Caco-2 (cell line): ENCODE measurements at regions of chr3 and their contacts with region 1.

Region 1: GRCh38 chr3:10205451-10206165 is 40.9 kb downstream of the IRAK2 start:
- DNase-seq: no peak
- H3K4me3 ChIP-seq: no peak overlapping the region
- H3K4me3 Mint-ChIP-seq: no peak overlapping the region
- H3K27ac Mint-ChIP-seq: peak overlapping the region; percentile 94
- H3K4me1 ChIP-seq: peaks cover 56% of the 10 kb centered on the region
- H3K4me1 Mint-ChIP-seq: peaks cover 17% of the 10 kb centered on the region
- H3K27me3 ChIP-seq: no peaks in the 10 kb centered on the region
- H3K27me3 Mint-ChIP-seq: no peaks in the 10 kb centered on the region
- CTCF ChIP-seq: no peak

Region 2: GRCh38 chr3:9782777-9783176 is 422.8 kb before region 1 on chr3:
- CTCF ChIA-PET with region 1: no interaction called
- POLR2A ChIA-PET with region 1: no interaction called
- intact Hi-C with region 1: no loop called
- DNase-seq: no peak
- H3K4me3 ChIP-seq: no peak overlapping the region
- H3K4me3 Mint-ChIP-seq: no peak overlapping the region
- H3K27ac Mint-ChIP-seq: no peak overlapping the region
- H3K4me1 ChIP-seq: no peaks in the 10 kb centered on the region
- H3K4me1 Mint-ChIP-seq: peaks cover 5% of the 10 kb centered on the region
- H3K27me3 ChIP-seq: no peaks in the 10 kb centered on the region
- H3K27me3 Mint-ChIP-seq: no peaks in the 10 kb centered on the region
- CTCF ChIP-seq: peak in 1 of 2 experiments; percentile 14

Region 3: DNA sequence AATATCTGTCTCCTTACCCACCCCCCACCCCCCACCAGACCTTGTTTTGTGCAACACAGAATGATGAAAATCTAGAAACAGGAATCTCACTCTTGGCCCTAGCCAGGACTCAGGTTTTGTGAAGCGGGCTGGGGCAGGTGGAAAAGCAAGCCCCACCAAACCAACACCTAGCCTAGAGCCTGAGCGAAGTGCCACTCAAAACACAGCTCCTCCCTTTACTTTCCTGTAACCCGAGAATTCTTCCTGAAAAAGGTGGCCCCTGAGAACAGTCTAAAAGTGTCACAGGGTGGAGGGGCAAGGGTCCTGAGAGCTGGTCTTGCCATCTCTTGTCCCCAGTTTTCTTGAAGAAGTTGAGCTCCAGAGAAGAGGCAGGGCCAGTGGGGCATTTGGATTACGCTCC is 344.4 kb before region 1 on chr3:
- CTCF ChIA-PET with region 1: no interaction called
- POLR2A ChIA-PET with region 1: interaction called, 12 read pairs
- intact Hi-C with region 1: no loop called
- DNase-seq: no peak
- H3K4me3 ChIP-seq: no peak overlapping the region
- H3K4me3 Mint-ChIP-seq: no peak overlapping the region
- H3K27ac Mint-ChIP-seq: no peak overlapping the region
- H3K4me1 ChIP-seq: no peaks in the 10 kb centered on the region; the same call in 1 of the 2 replicates
- H3K4me1 Mint-ChIP-seq: no peaks in the 10 kb centered on the region
- H3K27me3 ChIP-seq: no peaks in the 10 kb centered on the region
- H3K27me3 Mint-ChIP-seq: no peaks in the 10 kb centered on the region
- CTCF ChIP-seq: no peak

Region 4: DNA sequence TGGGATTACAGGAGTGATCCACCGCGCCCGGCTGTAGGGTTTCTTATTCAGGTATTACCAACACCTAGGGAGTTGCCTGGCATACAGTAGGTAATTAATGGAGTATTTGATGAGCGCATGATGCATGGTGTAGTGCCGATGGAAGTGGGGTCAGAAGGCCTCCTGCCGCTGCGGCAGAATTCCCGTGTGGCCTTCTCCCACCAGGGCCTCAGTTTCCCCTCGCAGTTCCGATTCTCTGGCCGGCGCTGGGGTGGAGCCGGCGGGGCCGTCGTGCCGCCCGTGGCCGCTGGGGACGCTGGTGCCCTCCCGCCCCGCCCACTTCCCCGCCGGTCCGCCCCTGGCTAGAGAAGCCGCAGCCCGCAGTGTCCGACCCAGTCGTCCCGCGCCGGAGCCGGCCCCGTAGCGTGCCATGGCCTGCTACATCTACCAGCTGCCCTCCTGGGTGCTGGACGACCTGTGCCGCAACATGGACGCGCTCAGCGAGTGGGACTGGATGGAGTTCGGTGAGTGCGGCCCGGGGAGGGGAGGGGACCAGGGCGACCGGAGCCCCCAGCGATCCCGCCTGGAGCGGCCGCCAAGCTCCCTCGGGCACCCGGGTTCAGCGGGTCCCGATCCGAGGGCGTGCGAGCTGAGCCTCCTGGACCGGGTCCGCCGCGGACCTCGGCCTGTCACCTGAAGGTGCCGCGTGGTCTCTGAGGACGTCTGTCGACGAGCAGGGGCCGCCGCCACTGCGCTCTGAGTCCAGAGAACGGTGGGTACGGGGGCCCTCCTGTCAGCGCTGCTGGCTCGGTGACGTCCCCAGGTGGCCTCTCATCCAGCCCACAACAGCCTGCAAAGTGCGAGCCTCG is 40.8 kb before region 1 on chr3 and contains the start of gene IRAK2:
- CTCF ChIA-PET with region 1: interaction called, 4 read pairs
- POLR2A ChIA-PET with region 1: interaction called, 3 read pairs
- intact Hi-C with region 1: loop called (anchors 2 kb)
- DNase-seq: peak; percentile 73 to 82
- H3K4me3 ChIP-seq: peak within 1 kb of the TSS; percentile 89
- H3K4me3 Mint-ChIP-seq: peak within 1 kb of the TSS; percentile 68
- H3K27ac Mint-ChIP-seq: no peak within 1 kb of the TSS
- H3K4me1 ChIP-seq: peaks cover 4% of the 10 kb centered on the region; the same call in 1 of the 2 replicates
- H3K4me1 Mint-ChIP-seq: no peaks in the 10 kb centered on the region
- H3K27me3 ChIP-seq: no peaks in the 10 kb centered on the region
- H3K27me3 Mint-ChIP-seq: no peaks in the 10 kb centered on the region
- CTCF ChIP-seq: peak; percentile 53 to 89
- total RNA-seq, gene IRAK2: 3.8 and 4.2 TPM in 2 replicates

Region 5: DNA sequence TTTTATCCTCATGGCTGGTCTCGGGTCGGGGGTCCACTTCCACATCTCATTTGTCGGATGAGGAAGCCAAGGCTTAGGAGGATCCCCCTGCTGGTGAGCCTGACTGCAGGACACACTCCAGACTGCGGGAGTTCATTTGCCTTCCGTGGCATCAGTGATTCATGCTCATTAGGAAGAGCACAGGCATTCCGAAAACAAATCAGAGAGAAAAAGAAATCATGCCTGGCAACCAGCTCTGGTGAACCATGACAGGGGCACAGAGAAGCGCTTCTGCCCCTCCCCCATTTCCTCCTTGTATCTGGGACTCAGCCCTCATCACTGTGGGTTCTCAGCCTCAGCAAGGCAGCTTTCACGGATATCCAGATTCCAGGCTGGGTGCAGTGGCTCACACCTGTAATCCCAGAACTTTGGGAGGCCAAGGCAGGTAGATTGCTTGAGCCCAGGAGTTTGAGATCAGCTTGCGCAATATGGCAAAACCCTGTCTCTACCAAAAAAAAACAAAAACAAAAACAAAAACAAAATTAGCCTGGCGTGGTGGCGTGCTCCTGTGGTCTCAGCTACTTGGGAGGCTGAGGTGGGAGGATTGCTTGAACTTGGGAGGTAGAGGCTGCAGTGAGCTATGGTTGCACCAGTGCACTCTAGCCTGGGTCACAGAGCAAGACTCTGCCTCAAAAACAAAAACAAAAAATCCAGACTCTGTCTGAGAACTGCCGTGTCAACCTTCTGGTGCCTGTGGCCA is 12.5 kb before region 1 on chr3:
- CTCF ChIA-PET with region 1: interaction called, 12 read pairs
- POLR2A ChIA-PET with region 1: interaction called, 12 read pairs
- intact Hi-C with region 1: loop called (anchors 1 kb)
- DNase-seq: no peak
- H3K4me3 ChIP-seq: no peak overlapping the region
- H3K4me3 Mint-ChIP-seq: no peak overlapping the region
- H3K27ac Mint-ChIP-seq: peak overlapping the region; percentile 85
- H3K4me1 ChIP-seq: peaks cover 45% of the 10 kb centered on the region
- H3K4me1 Mint-ChIP-seq: peaks cover 28% of the 10 kb centered on the region
- H3K27me3 ChIP-seq: no peaks in the 10 kb centered on the region
- H3K27me3 Mint-ChIP-seq: no peaks in the 10 kb centered on the region
- CTCF ChIP-seq: peak in 1 of 2 experiments; percentile 11

Region 6: DNA sequence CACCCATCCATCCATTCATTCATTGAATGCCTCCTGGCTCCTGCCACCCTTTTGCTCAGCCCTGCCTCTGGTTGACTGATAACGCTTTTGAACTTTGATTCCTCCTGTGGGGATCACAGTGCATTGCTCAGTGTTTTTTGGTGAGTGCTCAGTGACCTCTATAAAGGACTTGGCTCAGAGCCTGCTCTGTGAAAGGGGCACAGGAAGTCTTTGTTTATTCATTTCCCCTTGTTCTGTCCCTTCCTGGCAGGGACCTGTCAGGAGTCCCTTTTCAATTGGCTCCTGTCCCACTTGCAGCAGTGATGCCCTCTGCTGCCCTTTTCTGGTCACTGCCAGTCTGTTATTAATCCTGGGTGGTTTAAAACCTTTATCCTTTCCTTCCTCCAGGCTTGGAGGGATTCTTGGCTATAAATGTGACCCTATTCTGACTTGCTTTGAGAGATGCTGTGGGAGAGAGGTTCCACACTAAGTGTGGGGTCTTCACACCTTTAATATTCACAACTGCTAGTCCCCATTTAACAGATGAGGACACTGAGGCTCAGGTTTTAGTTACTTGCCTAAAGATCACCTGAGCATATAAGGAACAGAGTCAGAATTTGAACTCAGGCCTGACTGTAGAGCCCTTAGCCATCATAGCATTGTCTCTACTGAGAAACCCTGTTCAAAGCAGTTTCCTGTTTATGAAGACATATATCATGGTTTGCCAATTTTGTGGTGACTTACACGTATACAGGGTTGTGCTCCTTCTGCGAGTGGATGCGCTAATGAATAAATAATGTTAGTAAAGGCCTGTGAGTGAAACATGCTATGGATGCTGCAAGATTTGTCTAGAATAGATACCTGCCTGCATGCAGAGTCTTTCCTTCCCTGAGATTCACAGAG is 19.4 kb after region 1 on chr3:
- CTCF ChIA-PET with region 1: interaction called, 6 read pairs
- POLR2A ChIA-PET with region 1: interaction called, 3 read pairs
- intact Hi-C with region 1: loop called (anchors 1 kb)
- DNase-seq: peak; percentile 63 to 67
- H3K4me3 ChIP-seq: no peak overlapping the region
- H3K4me3 Mint-ChIP-seq: no peak overlapping the region
- H3K27ac Mint-ChIP-seq: no peak overlapping the region
- H3K4me1 ChIP-seq: no peaks in the 10 kb centered on the region
- H3K4me1 Mint-ChIP-seq: peaks cover 7% of the 10 kb centered on the region
- H3K27me3 ChIP-seq: no peaks in the 10 kb centered on the region
- H3K27me3 Mint-ChIP-seq: no peaks in the 10 kb centered on the region
- CTCF ChIP-seq: peak; percentile 72 to 74

Region 7: DNA sequence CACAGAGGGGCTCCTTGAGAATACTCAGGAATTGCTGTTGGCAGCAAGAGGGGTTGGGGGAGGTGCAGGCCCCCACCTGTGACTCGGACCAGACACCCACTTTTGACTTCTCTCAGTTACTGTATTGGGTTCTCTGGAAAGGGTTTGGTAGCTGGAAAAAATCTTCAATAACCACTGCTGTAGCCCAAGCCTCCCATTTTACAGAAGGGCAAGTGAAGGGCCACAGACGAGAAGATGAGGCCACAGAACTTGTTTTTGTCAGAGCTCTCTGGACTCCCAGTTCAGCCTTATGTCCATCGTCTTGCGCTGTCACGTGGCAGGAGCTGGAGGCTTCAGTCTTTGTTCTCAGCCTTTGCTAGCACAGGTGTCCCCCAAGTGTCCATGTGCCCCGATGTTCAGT is 29.9 kb after region 1 on chr3:
- CTCF ChIA-PET with region 1: no interaction called
- POLR2A ChIA-PET with region 1: no interaction called
- intact Hi-C with region 1: no loop called
- DNase-seq: no peak
- H3K4me3 ChIP-seq: no peak overlapping the region
- H3K4me3 Mint-ChIP-seq: no peak overlapping the region
- H3K27ac Mint-ChIP-seq: no peak overlapping the region
- H3K4me1 ChIP-seq: no peaks in the 10 kb centered on the region
- H3K4me1 Mint-ChIP-seq: no peaks in the 10 kb centered on the region
- H3K27me3 ChIP-seq: no peaks in the 10 kb centered on the region
- H3K27me3 Mint-ChIP-seq: no peaks in the 10 kb centered on the region
- CTCF ChIP-seq: no peak

Region 8: GRCh38 chr3:10248184-10249080 is 42.8 kb after region 1 on chr3 and contains the start of gene TATDN2:
- CTCF ChIA-PET with region 1: interaction called, 3 read pairs
- POLR2A ChIA-PET with region 1: interaction called, 10 read pairs
- intact Hi-C with region 1: loop called (anchors 1 kb)
- DNase-seq: peak; percentile 95 to 97
- H3K4me3 ChIP-seq: peak within 1 kb of the TSS; percentile 76
- H3K4me3 Mint-ChIP-seq: peak within 1 kb of the TSS; percentile 92
- H3K27ac Mint-ChIP-seq: peak within 1 kb of the TSS; percentile 92
- H3K4me1 ChIP-seq: peaks cover 12% of the 10 kb centered on the region; the same call in 1 of the 2 replicates
- H3K4me1 Mint-ChIP-seq: peaks cover 5% of the 10 kb centered on the region
- H3K27me3 ChIP-seq: no peaks in the 10 kb centered on the region
- H3K27me3 Mint-ChIP-seq: no peaks in the 10 kb centered on the region
- CTCF ChIP-seq: no peak
- total RNA-seq, gene TATDN2: 29.3 and 32.1 TPM in 2 replicates